Endothelial cell of umbilical vein (primary cell): ENCODE measurements at regions of chr5 and their contacts with region 1.

Region 1: DNA sequence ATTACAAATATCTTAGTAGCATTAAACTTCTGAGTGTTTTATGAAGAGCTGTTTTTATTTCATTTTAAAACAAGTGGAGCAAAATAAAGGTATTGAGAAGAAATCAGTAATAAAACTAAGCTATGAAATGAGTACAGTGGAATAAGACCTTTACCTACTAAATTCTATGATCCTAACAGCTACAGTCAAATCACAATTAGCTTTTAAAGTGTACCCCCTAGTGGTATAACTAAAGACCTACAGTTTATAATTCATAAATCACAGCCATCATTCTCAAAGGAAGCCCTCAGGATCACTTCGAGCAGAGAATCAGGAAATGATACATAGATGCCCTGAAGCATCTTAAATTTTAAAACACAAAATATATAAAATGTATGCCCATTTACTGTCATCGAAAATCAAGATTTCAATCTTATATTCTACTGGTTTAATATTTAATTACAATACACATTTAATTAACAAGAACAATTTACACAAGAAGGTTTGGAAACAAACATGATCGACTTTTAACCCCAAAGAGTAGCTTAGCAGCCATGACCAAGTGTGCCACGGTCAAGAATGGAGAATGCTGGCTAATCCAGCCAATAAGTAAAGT is 12.3 kb downstream of the CCNH start:
- DNase-seq: peak; percentile 63
- H3K4me3 ChIP-seq: no peak overlapping the region
- H3K27ac ChIP-seq: peak overlapping the region; percentile 39
- H3K4me1 ChIP-seq: peaks cover 13% of the 10 kb centered on the region
- H3K27me3 ChIP-seq: no peaks in the 10 kb centered on the region
- CTCF ChIP-seq: peak; percentile 29 to 33
- POLR2A ChIP-seq: peak; percentile 36

Region 2: GRCh38 chr5:86968301-86968753 is 432.1 kb before region 1 on chr5:
- CTCF ChIA-PET with region 1: interaction called, 11 read pairs
- POLR2A ChIA-PET with region 1: no interaction called
- dilution Hi-C with region 1: no loop called
- intact Hi-C with region 1: loop called (anchors 5 kb)
- DNase-seq: peak; percentile 76
- H3K4me3 ChIP-seq: peak overlapping the region in 1 of 3 experiments; percentile 27
- H3K27ac ChIP-seq: no peak overlapping the region
- H3K4me1 ChIP-seq: peaks cover 7% of the 10 kb centered on the region
- H3K27me3 ChIP-seq: no peaks in the 10 kb centered on the region
- CTCF ChIP-seq: peak; percentile 11 to 19
- POLR2A ChIP-seq: no peak

Region 3: GRCh38 chr5:87020099-87020934 is 380.1 kb before region 1 on chr5:
- CTCF ChIA-PET with region 1: interaction called, 11 read pairs
- POLR2A ChIA-PET with region 1: no interaction called
- dilution Hi-C with region 1: no loop called
- intact Hi-C with region 1: no loop called
- DNase-seq: no peak
- H3K4me3 ChIP-seq: no peak overlapping the region
- H3K27ac ChIP-seq: no peak overlapping the region
- H3K4me1 ChIP-seq: peaks cover 2% of the 10 kb centered on the region
- H3K27me3 ChIP-seq: peaks cover 1 to 3% of the 10 kb centered on the region in 2 experiments
- CTCF ChIP-seq: no peak
- POLR2A ChIP-seq: no peak

Region 4: GRCh38 chr5:87195104-87195591 is 205.3 kb before region 1 on chr5:
- CTCF ChIA-PET with region 1: no interaction called
- POLR2A ChIA-PET with region 1: no interaction called
- dilution Hi-C with region 1: no loop called
- intact Hi-C with region 1: loop called (anchors 2 kb)
- DNase-seq: peak; percentile 85
- H3K4me3 ChIP-seq: peak overlapping the region in 1 of 3 experiments; percentile 40
- H3K27ac ChIP-seq: peak overlapping the region; percentile 98
- H3K4me1 ChIP-seq: peaks cover 25% of the 10 kb centered on the region
- H3K27me3 ChIP-seq: no peaks in the 10 kb centered on the region
- CTCF ChIP-seq: no peak
- POLR2A ChIP-seq: no peak

Region 5: GRCh38 chr5:87412630-87413342 is 12.4 kb after region 1 on chr5 and contains the start of gene CCNH:
- CTCF ChIA-PET with region 1: interaction called, 33 read pairs
- POLR2A ChIA-PET with region 1: interaction called, 3 read pairs
- dilution Hi-C with region 1: no loop called
- intact Hi-C with region 1: loop called (anchors 1 kb)
- DNase-seq: peak; percentile 98
- H3K4me3 ChIP-seq: peak within 1 kb of the TSS; percentile 71 to 96 (median 94)
- H3K27ac ChIP-seq: peak within 1 kb of the TSS; percentile 97
- H3K4me1 ChIP-seq: peaks cover 18% of the 10 kb centered on the region
- H3K27me3 ChIP-seq: no peaks in the 10 kb centered on the region
- CTCF ChIP-seq: no peak
- POLR2A ChIP-seq: peak; percentile 89
- total RNA-seq, gene CCNH: 50.6 and 54.1 TPM in 2 replicates

Region 6: DNA sequence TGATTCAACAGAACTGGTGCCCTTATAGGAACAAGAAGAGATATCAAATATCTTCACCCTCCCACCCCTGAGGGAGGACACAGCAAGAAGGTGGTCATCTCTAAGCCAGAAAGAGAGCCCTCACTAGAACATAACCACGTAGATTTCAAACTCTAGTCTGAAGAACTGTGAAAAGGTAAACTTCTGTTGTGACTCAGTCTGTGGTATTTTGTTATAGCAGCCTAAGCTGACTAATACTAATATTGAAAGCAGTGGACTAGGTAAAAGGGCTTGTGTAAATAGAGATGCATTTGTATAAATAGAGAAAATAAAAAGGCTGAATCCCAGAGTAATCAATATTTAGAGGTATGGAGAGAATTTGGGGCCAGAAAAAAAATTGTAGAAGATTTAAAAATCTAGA is 170.0 kb after region 1 on chr5:
- CTCF ChIA-PET with region 1: no interaction called
- POLR2A ChIA-PET with region 1: no interaction called
- dilution Hi-C with region 1: no loop called
- intact Hi-C with region 1: no loop called
- DNase-seq: no peak
- H3K4me3 ChIP-seq: no peak overlapping the region
- H3K27ac ChIP-seq: no peak overlapping the region
- H3K4me1 ChIP-seq: no peaks in the 10 kb centered on the region
- H3K27me3 ChIP-seq: no peaks in the 10 kb centered on the region
- CTCF ChIP-seq: no peak
- POLR2A ChIP-seq: no peak

Region 7: GRCh38 chr5:88883059-88883835 is 1482.8 kb after region 1 on chr5 and contains the start of gene MEF2C:
- CTCF ChIA-PET with region 1: no interaction called
- POLR2A ChIA-PET with region 1: no interaction called
- dilution Hi-C with region 1: no loop called
- intact Hi-C with region 1: no loop called
- DNase-seq: peak; percentile 96
- H3K4me3 ChIP-seq: peak within 1 kb of the TSS; percentile 79 to 100 (median 100)
- H3K27ac ChIP-seq: peak within 1 kb of the TSS; percentile 95
- H3K4me1 ChIP-seq: peaks cover 31% of the 10 kb centered on the region
- H3K27me3 ChIP-seq: no peaks in the 10 kb centered on the region
- CTCF ChIP-seq: no peak
- POLR2A ChIP-seq: peak; percentile 70
- total RNA-seq, gene MEF2C: 58.3 and 67.7 TPM in 2 replicates